Ascending aorta (tissue), 2 donors: ENCODE measurements at regions of chr6 and their contacts with region 1.

Region 1: DNA sequence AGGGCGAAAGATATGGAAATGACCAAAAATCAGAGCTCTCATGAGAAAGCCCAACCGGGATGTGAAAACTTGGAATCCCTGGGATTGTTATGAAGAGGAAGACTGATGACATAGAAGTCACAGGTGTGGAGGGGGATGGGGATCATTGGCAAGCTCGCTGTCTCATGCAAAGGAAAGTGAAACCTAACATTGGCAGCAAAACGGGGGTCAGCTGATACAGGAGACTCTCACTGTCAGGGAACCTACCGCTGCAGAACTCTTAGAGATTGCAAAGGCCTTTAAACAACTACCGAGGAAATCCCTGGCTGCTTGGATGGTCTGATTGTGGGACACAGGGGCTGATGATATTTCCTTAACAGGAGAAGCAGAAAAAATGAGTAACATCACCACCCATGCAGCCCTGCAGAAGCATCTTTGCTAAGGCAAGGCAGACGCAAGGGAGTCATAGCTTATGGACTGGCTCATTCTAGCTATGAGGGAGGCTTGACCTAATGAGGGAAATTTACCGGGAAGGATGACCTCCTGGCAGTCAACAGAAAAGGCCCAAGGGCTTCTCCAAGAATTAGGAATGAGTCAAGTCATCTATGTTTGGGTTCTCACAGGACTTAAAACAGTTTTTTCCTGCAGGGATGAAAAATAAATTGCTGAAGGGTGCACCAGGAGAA is 7.0 kb downstream of the MUC21 start:
- DNase-seq: no peak
- H3K4me3 ChIP-seq: no peak overlapping the region
- H3K27ac ChIP-seq: no peak overlapping the region
- H3K4me1 ChIP-seq: no peaks in the 10 kb centered on the region
- H3K27me3 ChIP-seq: no peaks in the 10 kb centered on the region
- CTCF ChIP-seq: no peak

Region 2: GRCh38 chr6:30974488-30975252 is 15.9 kb before region 1 on chr6:
- intact Hi-C with region 1: loop called (anchors 1 kb)
- DNase-seq: no peak
- H3K4me3 ChIP-seq: no peak overlapping the region
- H3K27ac ChIP-seq: no peak overlapping the region
- H3K4me1 ChIP-seq: no peaks in the 10 kb centered on the region
- H3K27me3 ChIP-seq: no peaks in the 10 kb centered on the region
- CTCF ChIP-seq: no peak

Region 3: DNA sequence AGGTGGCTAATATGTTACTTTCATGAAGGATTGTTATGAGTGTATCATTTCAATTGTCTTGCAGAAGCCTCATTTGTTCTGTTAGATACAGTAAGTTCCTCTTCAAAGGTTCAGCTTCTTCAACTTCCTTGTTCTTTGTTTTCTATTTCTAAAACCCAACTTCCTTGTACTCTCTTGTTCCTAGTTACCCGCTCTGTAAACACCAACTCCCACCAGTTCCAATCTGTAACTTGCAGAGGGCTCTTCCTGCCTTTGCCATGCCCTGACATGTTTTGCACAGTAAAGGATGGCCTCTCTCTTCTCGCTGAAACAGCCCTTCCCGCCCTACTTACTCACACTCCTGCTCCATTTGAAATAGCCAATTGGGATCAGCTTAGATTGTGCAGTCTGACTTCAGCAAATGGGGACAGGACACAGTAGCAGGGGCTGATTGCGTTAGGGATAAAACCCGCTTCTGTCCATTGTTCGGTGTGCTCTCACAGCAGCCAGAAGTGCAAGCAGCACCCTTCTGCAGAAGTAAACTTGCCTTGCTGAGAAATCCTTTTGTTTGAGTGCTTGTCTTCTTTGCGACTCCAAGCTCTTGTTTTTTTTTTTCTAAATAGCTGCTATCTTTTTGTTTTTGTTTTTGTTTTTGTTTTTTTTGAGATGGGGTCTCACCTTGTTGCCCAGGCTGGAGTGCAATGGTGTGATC is 225.8 kb after region 1 on chr6:
- intact Hi-C with region 1: no loop called
- DNase-seq: no peak
- H3K4me3 ChIP-seq: no peak overlapping the region
- H3K27ac ChIP-seq: no peak overlapping the region
- H3K4me1 ChIP-seq: no peaks in the 10 kb centered on the region
- H3K27me3 ChIP-seq: no peaks in the 10 kb centered on the region
- CTCF ChIP-seq: no peak